Activated naive CD4-positive, alpha-beta T cell treated with anti-CD3 and anti-CD28 coated beads for 36 hours (primary cell): ENCODE measurements at regions of chr3 and their contacts with region 1.

Region 1: DNA sequence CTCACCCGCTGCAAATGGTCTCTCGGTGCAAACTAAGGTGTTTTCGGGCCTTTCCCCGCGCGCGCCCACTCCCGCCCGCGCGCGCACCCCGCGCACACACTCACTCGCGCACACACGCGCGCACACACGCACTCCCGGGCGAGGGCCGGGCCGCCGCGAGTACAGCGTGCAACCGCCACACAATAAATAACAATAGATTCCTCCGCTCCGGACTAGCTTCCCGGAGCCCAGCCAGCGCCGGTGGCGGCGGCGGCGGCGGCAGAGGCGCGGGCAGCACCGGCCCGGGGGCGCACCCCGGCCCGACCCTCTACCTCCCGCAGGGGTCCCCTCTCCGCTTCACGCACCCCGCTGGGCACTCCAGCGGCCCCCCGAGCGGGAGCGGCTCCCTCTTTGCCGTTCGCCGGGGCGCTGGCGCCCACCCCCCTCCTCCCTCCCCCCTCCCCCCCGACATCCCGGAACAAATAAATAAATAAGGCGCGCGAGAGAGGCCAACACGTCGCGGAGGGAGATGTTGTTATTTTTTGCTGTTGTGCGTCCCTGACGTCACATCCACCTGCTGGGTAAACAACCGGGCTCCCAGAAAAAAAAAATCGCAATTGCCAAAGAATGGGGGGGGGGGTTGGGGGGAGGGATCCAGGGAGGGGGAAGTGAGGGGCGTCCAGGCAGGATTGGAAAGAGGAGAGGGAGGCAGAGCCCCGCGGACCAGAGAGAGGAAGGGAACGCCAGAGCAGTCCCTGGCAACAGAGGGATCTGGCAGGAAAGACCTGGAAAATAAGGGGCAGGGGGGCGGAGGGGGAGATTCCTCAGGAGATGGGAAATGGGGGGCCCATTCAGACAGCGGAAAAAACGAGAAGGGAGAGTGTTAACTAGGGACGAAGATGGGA is at the start of gene FOXP1:
- DNase-seq: peak; percentile 63
- H3K4me3 Mint-ChIP-seq: peak within 1 kb of the TSS; percentile 95
- H3K27ac Mint-ChIP-seq: peak within 1 kb of the TSS; percentile 99
- H3K4me1 Mint-ChIP-seq: peaks cover 47% of the 10 kb centered on the region
- H3K27me3 Mint-ChIP-seq: no peaks in the 10 kb centered on the region
- total RNA-seq, gene FOXP1: 95.2 to 97.4 TPM

Region 2: DNA sequence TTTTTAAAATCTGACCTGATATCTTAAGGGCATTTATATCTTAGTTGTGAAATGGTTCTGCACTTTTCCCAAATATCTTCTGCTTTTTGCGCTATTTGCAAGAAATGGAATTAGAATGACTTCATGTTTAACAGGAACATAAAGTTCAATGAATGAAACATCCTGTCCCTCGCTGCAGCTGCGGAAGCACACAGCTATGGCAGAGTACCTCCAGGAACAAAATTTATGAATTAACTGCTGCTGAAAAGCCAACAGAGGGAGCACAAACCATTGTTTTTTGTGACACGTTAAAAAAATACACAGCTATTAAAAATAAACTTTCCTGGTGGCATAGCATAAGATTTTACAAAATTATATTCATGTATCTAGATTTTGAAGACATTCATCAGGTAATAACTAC is 867.0 kb before region 1 on chr3:
- CTCF ChIA-PET with region 1: interaction called, 4 read pairs
- intact Hi-C with region 1: loop called (anchors 2 kb)
- DNase-seq: peak; percentile 24
- H3K4me3 Mint-ChIP-seq: no peak overlapping the region
- H3K27ac Mint-ChIP-seq: no peak overlapping the region
- H3K4me1 Mint-ChIP-seq: peaks cover 2% of the 10 kb centered on the region
- H3K27me3 Mint-ChIP-seq: peaks cover 4% of the 10 kb centered on the region

Region 3: GRCh38 chr3:71064288-71064955 is 519.4 kb before region 1 on chr3:
- CTCF ChIA-PET with region 1: interaction called, 3 read pairs
- intact Hi-C with region 1: loop called (anchors 1 kb)
- DNase-seq: peak; percentile 69
- H3K4me3 Mint-ChIP-seq: no peak overlapping the region
- H3K27ac Mint-ChIP-seq: no peak overlapping the region
- H3K4me1 Mint-ChIP-seq: peaks cover 51% of the 10 kb centered on the region
- H3K27me3 Mint-ChIP-seq: no peaks in the 10 kb centered on the region

Region 4: GRCh38 chr3:71360764-71361163 is 223.0 kb before region 1 on chr3:
- CTCF ChIA-PET with region 1: interaction called, 3 read pairs
- intact Hi-C with region 1: loop called (anchors 1 kb)
- DNase-seq: peak; percentile 43
- H3K4me3 Mint-ChIP-seq: peak overlapping the region; percentile 48
- H3K27ac Mint-ChIP-seq: peak overlapping the region; percentile 70
- H3K4me1 Mint-ChIP-seq: peaks cover 82% of the 10 kb centered on the region
- H3K27me3 Mint-ChIP-seq: no peaks in the 10 kb centered on the region

Region 5: GRCh38 chr3:71456156-71456555 is 127.7 kb before region 1 on chr3:
- CTCF ChIA-PET with region 1: interaction called, 4 read pairs
- intact Hi-C with region 1: loop called (anchors 1 kb)
- DNase-seq: no peak
- H3K4me3 Mint-ChIP-seq: peak overlapping the region; percentile 77
- H3K27ac Mint-ChIP-seq: peak overlapping the region; percentile 93
- H3K4me1 Mint-ChIP-seq: peaks cover 88% of the 10 kb centered on the region
- H3K27me3 Mint-ChIP-seq: no peaks in the 10 kb centered on the region

Region 6: DNA sequence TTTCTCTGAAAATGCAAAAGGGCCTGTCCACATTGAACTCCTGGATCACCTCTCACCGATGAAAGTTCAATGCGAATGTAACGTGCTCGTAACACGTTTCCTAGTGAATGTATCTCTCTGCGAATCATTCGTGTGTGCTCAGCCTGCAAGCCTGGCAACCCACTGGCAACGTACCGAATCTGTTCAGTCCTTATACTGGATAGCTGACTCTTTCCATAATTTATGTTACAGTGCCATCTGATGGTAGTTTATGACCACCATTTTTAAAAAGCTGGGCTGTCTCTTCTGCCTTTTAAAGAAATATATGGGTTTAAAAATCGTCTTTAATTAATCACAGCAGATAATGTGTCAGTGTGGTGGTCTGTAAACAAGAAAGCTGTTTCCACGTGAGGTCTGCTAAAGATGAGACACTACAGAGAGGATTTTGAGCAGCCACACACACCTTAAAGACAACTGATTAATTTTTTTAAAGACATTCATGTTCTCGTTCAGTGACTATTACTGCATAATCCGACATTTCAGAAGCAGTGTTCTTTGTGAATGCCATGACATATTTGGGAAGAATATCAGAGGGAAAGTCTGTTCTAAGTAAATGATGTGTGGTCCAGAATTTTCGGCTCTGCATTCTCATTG is 69.1 kb after region 1 on chr3:
- CTCF ChIA-PET with region 1: no interaction called
- intact Hi-C with region 1: loop called (anchors 2 kb)
- DNase-seq: peak; percentile 42
- H3K4me3 Mint-ChIP-seq: no peak overlapping the region
- H3K27ac Mint-ChIP-seq: no peak overlapping the region
- H3K4me1 Mint-ChIP-seq: peaks cover 4% of the 10 kb centered on the region
- H3K27me3 Mint-ChIP-seq: no peaks in the 10 kb centered on the region